T-cell (primary cell): ENCODE measurements at regions of chr17 and their contacts with region 1.

Region 1: GRCh38 chr17:39057701-39058206 is 90.6 kb upstream of the FBXO47 start:
- DNase-seq: no peak
- ATAC-seq: no peak
- H3K4me3 ChIP-seq: peak overlapping the region in 1 of 2 donors; percentile 86
- H3K4me3 Mint-ChIP-seq: peak overlapping the region; percentile 72 to 84 (median 73)
- H3K27ac ChIP-seq: no peak overlapping the region
- H3K27ac Mint-ChIP-seq: peak overlapping the region in 1 of 2 donors; percentile 3
- H3K4me1 ChIP-seq: peaks cover 2 to 11% of the 10 kb centered on the region in 2 experiments
- H3K4me1 Mint-ChIP-seq: peaks cover 6 to 13% (median 11%) of the 10 kb centered on the region in 3 donors
- H3K27me3 ChIP-seq: no peaks in the 10 kb centered on the region
- H3K27me3 Mint-ChIP-seq: no peaks in the 10 kb centered on the region

Region 2: GRCh38 chr17:38572669-38573365 is 484.9 kb before region 1 on chr17:
- CTCF ChIA-PET with region 1: no interaction called
- POLR2A ChIA-PET with region 1: no interaction called
- DNase-seq: peak in 9 of 35 experiments; percentile 7 to 35 (median 26)
- ATAC-seq: peak; percentile 71 to 79 (median 76)
- H3K4me3 ChIP-seq: peak overlapping the region in 1 of 2 donors; percentile 52
- H3K4me3 Mint-ChIP-seq: peak overlapping the region; percentile 53 to 65 (median 64)
- H3K27ac ChIP-seq: no peak overlapping the region
- H3K27ac Mint-ChIP-seq: no peak overlapping the region
- H3K4me1 ChIP-seq: peaks cover 0 to 14% of the 10 kb centered on the region in 2 experiments
- H3K4me1 Mint-ChIP-seq: peaks cover 14 to 22% (median 18%) of the 10 kb centered on the region in 3 donors
- H3K27me3 ChIP-seq: peaks cover 26 to 98% of the 10 kb centered on the region in 2 experiments
- H3K27me3 Mint-ChIP-seq: peaks cover 87 to 88% of the 10 kb centered on the region in 2 donors

Region 3: DNA sequence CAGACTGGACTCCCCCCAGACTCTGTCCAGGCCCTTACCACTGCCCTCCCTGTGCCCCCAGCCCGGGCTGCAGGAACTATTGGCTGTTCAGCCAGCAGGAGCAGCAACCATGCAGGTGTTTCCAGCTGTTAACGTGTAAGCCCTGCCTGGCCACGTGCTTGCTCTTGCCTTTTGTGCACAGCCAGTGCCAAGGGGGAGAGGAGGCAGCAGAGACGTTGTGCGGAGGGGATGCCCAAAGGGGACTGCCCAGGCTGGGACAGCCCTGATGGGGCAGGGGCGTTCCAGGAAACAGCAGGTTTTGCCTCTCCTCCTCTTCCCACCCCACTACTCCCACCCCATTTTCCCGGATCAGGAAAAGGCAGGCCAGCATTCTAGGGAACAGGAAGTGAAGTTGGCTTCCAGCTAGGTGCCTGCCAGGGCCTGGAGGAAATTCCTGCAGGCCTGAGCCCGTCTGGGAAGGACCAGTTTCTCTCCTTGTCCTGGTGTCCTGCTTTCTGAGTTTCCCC is 149.0 kb before region 1 on chr17:
- CTCF ChIA-PET with region 1: no interaction called
- POLR2A ChIA-PET with region 1: no interaction called
- DNase-seq: no peak
- ATAC-seq: no peak
- H3K4me3 ChIP-seq: no peak overlapping the region
- H3K4me3 Mint-ChIP-seq: no peak overlapping the region
- H3K27ac ChIP-seq: peak overlapping the region; percentile 17
- H3K27ac Mint-ChIP-seq: peak overlapping the region in 1 of 2 donors; percentile 39
- H3K4me1 ChIP-seq: peaks cover 0 to 65% of the 10 kb centered on the region in 2 experiments
- H3K4me1 Mint-ChIP-seq: peaks cover 20 to 49% (median 48%) of the 10 kb centered on the region in 3 donors
- H3K27me3 ChIP-seq: no peaks in the 10 kb centered on the region
- H3K27me3 Mint-ChIP-seq: no peaks in the 10 kb centered on the region

Region 4: DNA sequence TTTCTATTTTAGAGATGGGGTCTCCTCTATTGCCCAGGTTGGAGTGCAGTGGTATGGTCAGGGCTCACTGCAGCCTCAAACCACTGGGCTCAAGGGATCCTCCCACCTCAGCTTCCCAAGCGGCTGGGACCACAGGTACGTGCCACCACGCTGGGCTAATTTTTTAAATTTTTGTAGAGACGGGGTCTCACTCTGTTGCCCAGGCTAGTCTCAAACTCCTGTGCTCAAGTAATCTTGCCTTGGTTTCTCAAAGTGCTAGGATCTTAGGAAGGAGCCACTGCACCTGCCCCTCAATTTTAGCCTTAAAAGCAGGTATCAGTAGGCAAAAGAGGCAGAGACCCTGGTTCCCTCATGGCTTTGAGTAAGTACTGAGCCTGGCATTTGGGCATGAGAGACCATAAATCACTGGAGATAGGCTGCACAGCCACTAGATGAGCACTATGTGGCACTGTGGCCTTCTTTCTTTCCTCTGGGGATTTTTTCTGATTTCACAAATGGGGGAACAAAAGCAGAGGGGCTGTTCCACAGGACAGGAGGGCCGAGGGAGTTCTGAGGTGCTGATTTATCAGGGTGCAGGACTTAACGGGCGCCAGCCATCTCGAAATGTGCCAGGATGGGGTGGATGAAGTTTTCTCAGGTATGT is 11.5 kb after region 1 on chr17:
- CTCF ChIA-PET with region 1: no interaction called
- POLR2A ChIA-PET with region 1: no interaction called
- DNase-seq: peak in 26 of 35 experiments; percentile 4 to 70 (median 20)
- ATAC-seq: peak; percentile 71 to 91 (median 82)
- H3K4me3 ChIP-seq: no peak overlapping the region
- H3K4me3 Mint-ChIP-seq: no peak overlapping the region
- H3K27ac ChIP-seq: no peak overlapping the region
- H3K27ac Mint-ChIP-seq: peak overlapping the region in 1 of 2 donors; percentile 85
- H3K4me1 ChIP-seq: peaks cover 0 to 7% of the 10 kb centered on the region in 2 experiments
- H3K4me1 Mint-ChIP-seq: peaks cover 3 to 8% (median 5%) of the 10 kb centered on the region in 3 donors
- H3K27me3 ChIP-seq: no peaks in the 10 kb centered on the region
- H3K27me3 Mint-ChIP-seq: no peaks in the 10 kb centered on the region

Region 5: GRCh38 chr17:39153599-39154051 is 95.9 kb after region 1 on chr17:
- CTCF ChIA-PET with region 1: interaction called in 1 of 2 experiments, 12 read pairs
- POLR2A ChIA-PET with region 1: interaction called in 1 of 2 experiments, 6 read pairs
- DNase-seq: peak; percentile 76 to 97 (median 90)
- ATAC-seq: peak; percentile 57 to 66 (median 59)
- H3K4me3 ChIP-seq: peak overlapping the region; percentile 92 to 99
- H3K4me3 Mint-ChIP-seq: peak overlapping the region; percentile 95 to 100 (median 100)
- H3K27ac ChIP-seq: peak overlapping the region; percentile 70
- H3K27ac Mint-ChIP-seq: peak overlapping the region; percentile 96 to 99
- H3K4me1 ChIP-seq: peaks cover 2 to 53% of the 10 kb centered on the region in 2 experiments
- H3K4me1 Mint-ChIP-seq: peaks cover 43 to 56% (median 47%) of the 10 kb centered on the region in 3 donors
- H3K27me3 ChIP-seq: peaks cover 0 to 16% of the 10 kb centered on the region in 2 experiments
- H3K27me3 Mint-ChIP-seq: peaks cover 0 to 9% of the 10 kb centered on the region in 2 donors

Region 6: DNA sequence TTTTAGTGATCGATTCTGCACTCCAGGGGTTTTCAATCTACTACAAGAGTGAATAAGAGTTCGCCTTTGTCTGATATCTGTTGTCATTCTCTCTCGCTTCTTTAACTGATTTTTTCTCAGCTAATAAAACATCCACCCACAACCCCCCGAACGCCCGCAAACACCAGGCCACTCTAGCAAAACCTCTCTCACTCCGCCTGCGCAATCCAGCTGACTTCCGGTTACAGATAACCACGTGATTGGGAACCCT is 142.0 kb after region 1 on chr17:
- CTCF ChIA-PET with region 1: interaction called, 3 to 16 read pairs
- POLR2A ChIA-PET with region 1: no interaction called
- DNase-seq: peak in 34 of 35 experiments; percentile 68 to 94 (median 82)
- ATAC-seq: peak; percentile 63 to 74 (median 68)
- H3K4me3 ChIP-seq: peak overlapping the region; percentile 74 to 77
- H3K4me3 Mint-ChIP-seq: peak overlapping the region; percentile 91 to 99 (median 98)
- H3K27ac ChIP-seq: peak overlapping the region; percentile 99
- H3K27ac Mint-ChIP-seq: peak overlapping the region; percentile 100
- H3K4me1 ChIP-seq: peaks cover 20 to 72% of the 10 kb centered on the region in 2 experiments
- H3K4me1 Mint-ChIP-seq: peaks cover 53 to 66% (median 62%) of the 10 kb centered on the region in 3 donors
- H3K27me3 ChIP-seq: no peaks in the 10 kb centered on the region
- H3K27me3 Mint-ChIP-seq: no peaks in the 10 kb centered on the region